ENCODE measurements at regions of chr1 and their contacts with region 1.

Region 1: DNA sequence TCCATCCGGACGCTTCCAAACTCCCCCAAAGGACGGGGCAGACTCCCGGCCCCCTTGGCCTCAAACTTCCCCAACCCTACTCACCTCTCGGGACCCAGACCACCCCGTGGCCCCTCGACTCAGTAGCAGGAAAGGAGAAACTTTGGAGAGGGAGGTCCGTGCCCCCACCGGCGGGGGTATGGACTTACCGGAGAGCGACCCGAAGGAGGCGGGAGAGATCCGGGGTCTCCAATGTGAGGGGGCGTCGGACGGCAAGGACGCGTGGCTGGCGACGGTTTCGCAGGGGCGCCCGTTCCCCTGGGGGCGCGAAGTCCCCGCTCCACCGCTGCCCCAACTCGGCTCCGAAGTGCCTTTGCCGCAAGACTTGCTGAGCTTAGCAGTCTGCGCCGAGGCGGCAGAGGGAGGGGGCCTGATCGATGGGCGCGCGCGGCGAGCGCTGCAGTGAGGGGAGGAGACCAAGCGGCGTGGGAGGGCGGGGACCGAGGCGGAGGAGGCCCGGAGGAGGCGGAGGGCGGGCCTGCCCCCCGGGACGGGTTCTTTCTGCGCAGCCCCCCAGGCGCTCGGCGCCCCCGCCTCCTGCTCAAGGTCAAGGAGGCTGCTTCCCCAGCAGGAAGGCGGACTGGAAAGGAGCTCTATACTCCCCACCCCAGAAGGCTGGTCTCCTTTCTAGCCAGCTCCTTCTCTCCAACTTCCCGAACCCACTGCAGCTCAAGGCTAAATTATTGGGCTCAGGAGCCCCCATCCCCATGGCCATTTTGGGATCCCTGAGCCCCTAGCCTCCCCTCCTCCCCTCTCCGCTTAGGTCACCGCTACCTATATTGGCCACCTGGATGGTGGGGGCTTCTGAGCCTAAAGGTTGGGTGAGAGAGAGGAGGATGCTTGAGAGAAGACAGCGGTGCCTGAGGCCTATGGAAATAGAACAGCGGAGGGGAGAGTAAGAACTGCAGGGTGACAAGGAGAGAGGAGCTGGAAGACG is at the start of gene SYT2:
- DNase-seq: peak; percentile 34 to 72 (median 71)
- ATAC-seq: peak; percentile 64 to 75
- H3K4me3 ChIP-seq: peak within 1 kb of the TSS; percentile 17
- H3K27ac ChIP-seq: no peak within 1 kb of the TSS
- H3K4me1 ChIP-seq: no peaks in the 10 kb centered on the region
- H3K27me3 ChIP-seq: no peaks in the 10 kb centered on the region
- total RNA-seq, gene SYT2: not detected

Region 2: GRCh38 chr1:202184750-202185460 is 525.5 kb before region 1 on chr1:
- intact Hi-C with region 1: loop called in 2 of 4 experiments (anchors 5 to 10 kb)
- DNase-seq: peak; percentile 82 to 94 (median 92)
- ATAC-seq: peak; percentile 59 to 73
- H3K4me3 ChIP-seq: no peak overlapping the region
- H3K27ac ChIP-seq: no peak overlapping the region
- H3K4me1 ChIP-seq: no peaks in the 10 kb centered on the region
- H3K27me3 ChIP-seq: no peaks in the 10 kb centered on the region

Region 3: DNA sequence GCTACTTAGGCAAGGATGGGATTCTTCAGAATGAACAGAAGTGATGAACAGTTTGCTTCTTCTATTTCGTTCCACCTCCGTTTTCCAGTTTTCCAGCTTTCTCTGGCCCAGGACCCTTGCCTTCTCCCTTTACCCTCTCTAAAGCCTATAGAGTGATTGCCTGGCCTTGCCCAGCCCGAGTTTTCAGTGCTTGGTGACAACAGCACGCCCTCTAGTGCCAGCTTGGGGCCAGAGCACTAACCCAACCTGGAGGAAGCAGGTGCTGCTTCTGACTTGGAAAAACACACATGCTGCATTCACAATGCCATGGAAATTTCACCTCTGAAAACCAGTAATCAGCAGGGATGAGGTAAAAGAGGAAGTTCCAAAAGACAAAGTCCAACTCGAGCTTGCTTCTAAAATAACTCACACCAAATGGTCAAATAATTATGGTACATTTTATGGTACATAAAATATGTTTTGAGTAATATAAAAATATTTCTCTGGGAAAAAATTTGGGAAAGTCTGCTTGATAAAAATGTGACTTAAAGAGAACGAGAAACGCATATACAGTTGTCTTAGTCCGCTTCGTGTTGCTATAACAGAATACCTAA is 394.7 kb before region 1 on chr1:
- intact Hi-C with region 1: loop called in 2 of 4 experiments (anchors 10 kb)
- DNase-seq: peak; percentile 68 to 86 (median 84)
- ATAC-seq: peak; percentile 65 to 78
- H3K4me3 ChIP-seq: no peak overlapping the region
- H3K27ac ChIP-seq: no peak overlapping the region
- H3K4me1 ChIP-seq: peaks cover 5% of the 10 kb centered on the region
- H3K27me3 ChIP-seq: no peaks in the 10 kb centered on the region

Region 4: DNA sequence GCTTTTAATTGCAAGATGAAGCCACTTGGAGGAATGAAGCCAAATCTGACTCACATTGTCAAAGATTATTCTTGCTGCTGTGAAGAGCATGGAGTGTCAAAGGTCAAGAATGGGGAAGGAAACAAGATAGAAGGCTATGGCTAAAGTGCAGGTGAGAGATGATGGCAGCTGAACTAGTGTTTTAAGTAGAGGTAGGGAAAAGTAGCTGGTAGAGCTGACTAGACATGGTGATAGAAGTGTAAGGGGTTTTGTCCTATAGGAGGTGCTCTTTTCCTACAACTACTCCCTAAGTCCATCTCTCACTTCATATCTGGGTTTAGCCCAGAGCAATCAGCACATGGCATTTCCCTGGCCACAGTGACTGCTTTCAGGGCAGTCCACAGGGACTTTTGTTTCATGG is 380.5 kb before region 1 on chr1:
- intact Hi-C with region 1: loop called in 1 of 4 experiments (anchors 10 kb)
- DNase-seq: no peak
- ATAC-seq: peak; percentile 25 to 48
- H3K4me3 ChIP-seq: no peak overlapping the region
- H3K27ac ChIP-seq: no peak overlapping the region
- H3K4me1 ChIP-seq: no peaks in the 10 kb centered on the region
- H3K27me3 ChIP-seq: no peaks in the 10 kb centered on the region

Region 5: DNA sequence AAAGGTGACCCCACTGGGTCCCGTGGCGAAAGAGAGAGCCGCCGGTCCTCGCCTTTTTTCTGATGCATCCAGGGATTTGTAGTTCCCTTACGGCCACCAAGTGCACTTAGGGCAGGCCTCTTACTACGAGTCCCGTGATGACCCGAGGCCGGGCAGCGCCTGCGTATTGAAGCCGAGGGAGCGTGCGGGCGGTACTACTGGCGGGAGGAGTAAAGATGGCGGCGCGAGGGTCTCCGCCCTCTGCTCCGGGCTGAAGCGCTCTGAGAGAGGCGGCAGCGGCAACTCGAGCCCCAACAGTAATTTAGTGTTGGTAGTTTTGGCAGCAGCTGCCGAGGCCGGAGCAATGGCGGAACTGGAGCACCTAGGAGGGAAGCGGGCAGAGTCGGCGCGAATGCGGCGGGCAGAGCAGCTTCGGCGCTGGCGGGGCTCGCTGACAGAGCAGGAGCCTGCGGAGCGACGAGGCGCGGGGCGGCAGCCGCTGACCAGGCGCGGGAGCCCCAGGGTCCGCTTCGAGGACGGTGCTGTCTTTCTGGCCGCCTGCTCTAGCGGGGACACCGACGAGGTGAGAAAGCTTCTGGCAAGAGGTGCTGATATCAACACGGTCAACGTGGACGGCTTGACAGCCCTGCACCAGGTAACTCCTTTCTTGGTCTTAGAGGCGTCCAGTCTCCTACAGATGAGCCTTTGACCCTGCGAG is 361.7 kb before region 1 on chr1 and contains the start of gene PPP1R12B:
- intact Hi-C with region 1: loop called in 2 of 4 experiments (anchors 10 kb)
- DNase-seq: peak; percentile 98 to 99 (median 99)
- ATAC-seq: peak; percentile 99 to 100
- H3K4me3 ChIP-seq: peak within 1 kb of the TSS; percentile 75
- H3K27ac ChIP-seq: peak within 1 kb of the TSS; percentile 93
- H3K4me1 ChIP-seq: no peaks in the 10 kb centered on the region
- H3K27me3 ChIP-seq: no peaks in the 10 kb centered on the region
- total RNA-seq, gene PPP1R12B: 574 to 741 (median 606) TPM

Region 6: GRCh38 chr1:202733251-202733650 is 22.9 kb after region 1 on chr1:
- intact Hi-C with region 1: no loop called
- DNase-seq: no peak
- ATAC-seq: no peak
- H3K4me3 ChIP-seq: no peak overlapping the region
- H3K27ac ChIP-seq: no peak overlapping the region
- H3K4me1 ChIP-seq: no peaks in the 10 kb centered on the region
- H3K27me3 ChIP-seq: no peaks in the 10 kb centered on the region